ENCODE measurements at regions of chr18 and their contacts with region 1.

Region 1: GRCh38 chr18:31722369-31722957 is 38.1 kb upstream of the B4GALT6 start:
- DNase-seq: peak; percentile 60 to 95
- H3K4me3 ChIP-seq: no peak overlapping the region
- H3K27ac ChIP-seq: no peak overlapping the region
- H3K4me1 ChIP-seq: no peaks in the 10 kb centered on the region
- H3K27me3 ChIP-seq: no peaks in the 10 kb centered on the region
- CTCF ChIP-seq: peak; percentile 67 to 92 (median 84)
- EP300 ChIP-seq: no peak
- POLR2A ChIP-seq: no peak
- RAD21 ChIP-seq: peak; percentile 77 to 86

Region 2: GRCh38 chr18:31156821-31157777 is 565.4 kb before region 1 on chr18:
- CTCF ChIA-PET with region 1: no interaction called
- POLR2A ChIA-PET with region 1: no interaction called
- DNase-seq: no peak
- H3K4me3 ChIP-seq: no peak overlapping the region
- H3K27ac ChIP-seq: no peak overlapping the region
- H3K4me1 ChIP-seq: peaks cover 0 to 5% (median 0%) of the 10 kb centered on the region in 4 experiments; a peak in 1 of 7 replicates
- H3K27me3 ChIP-seq: no peaks in the 10 kb centered on the region
- CTCF ChIP-seq: no peak
- EP300 ChIP-seq: no peak
- POLR2A ChIP-seq: no peak
- RAD21 ChIP-seq: no peak

Region 3: DNA sequence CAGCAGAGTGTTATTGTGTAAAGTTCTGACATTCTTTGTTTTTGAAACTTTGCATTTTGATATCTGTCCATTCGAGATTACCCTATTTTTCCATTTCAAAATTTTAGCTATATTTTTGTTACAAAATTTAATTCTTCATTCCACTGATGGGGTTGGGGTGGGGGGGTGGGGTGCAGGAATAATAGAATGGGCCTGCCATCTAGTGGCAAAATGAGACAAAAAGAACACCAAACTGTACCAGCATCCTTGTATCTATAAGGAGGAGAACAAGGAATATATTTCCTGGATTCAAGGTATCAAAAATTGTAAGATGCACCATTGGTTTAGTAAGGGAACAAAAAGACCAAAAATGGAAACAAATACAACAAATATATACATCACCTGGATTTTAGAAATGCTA is 158.7 kb before region 1 on chr18:
- CTCF ChIA-PET with region 1: interaction called, 32 read pairs
- POLR2A ChIA-PET with region 1: no interaction called
- DNase-seq: no peak
- H3K4me3 ChIP-seq: no peak overlapping the region
- H3K27ac ChIP-seq: no peak overlapping the region
- H3K4me1 ChIP-seq: no peaks in the 10 kb centered on the region
- H3K27me3 ChIP-seq: no peaks in the 10 kb centered on the region
- CTCF ChIP-seq: no peak; a peak in 1 of 4 replicates
- EP300 ChIP-seq: no peak
- POLR2A ChIP-seq: no peak
- RAD21 ChIP-seq: no peak; a peak in 1 of 4 replicates

Region 4: GRCh38 chr18:31685097-31686082 is 37.1 kb before region 1 on chr18:
- CTCF ChIA-PET with region 1: interaction called, 22 read pairs
- POLR2A ChIA-PET with region 1: interaction called, 5 read pairs
- DNase-seq: peak; percentile 49 to 86
- H3K4me3 ChIP-seq: peak overlapping the region; percentile 73 to 82 (median 80)
- H3K27ac ChIP-seq: peak overlapping the region; percentile 79
- H3K4me1 ChIP-seq: peaks cover 11 to 14% (median 13%) of the 10 kb centered on the region in 4 experiments; a peak in 6 of 7 replicates
- H3K27me3 ChIP-seq: no peaks in the 10 kb centered on the region
- CTCF ChIP-seq: peak; percentile 4 to 50 (median 39)
- EP300 ChIP-seq: no peak; a peak in 1 of 3 replicates
- POLR2A ChIP-seq: peak; percentile 37 to 81
- RAD21 ChIP-seq: peak in 1 of 2 experiments; percentile 22; a peak in 1 of 4 replicates

Region 5: GRCh38 chr18:31710826-31711225 is 11.6 kb before region 1 on chr18:
- CTCF ChIA-PET with region 1: interaction called, 16 read pairs
- POLR2A ChIA-PET with region 1: no interaction called
- DNase-seq: no peak
- H3K4me3 ChIP-seq: no peak overlapping the region
- H3K27ac ChIP-seq: no peak overlapping the region
- H3K4me1 ChIP-seq: peaks cover 0 to 4% (median under 1%) of the 10 kb centered on the region in 4 experiments; a peak in 1 of 7 replicates
- H3K27me3 ChIP-seq: no peaks in the 10 kb centered on the region
- CTCF ChIP-seq: peak in 2 of 3 experiments; percentile 5 to 47; a peak in 1 of 4 replicates
- EP300 ChIP-seq: no peak
- POLR2A ChIP-seq: no peak
- RAD21 ChIP-seq: peak; percentile 29 to 36; a peak in 2 of 4 replicates

Region 6: GRCh38 chr18:31819106-31819924 is 96.9 kb after region 1 on chr18:
- CTCF ChIA-PET with region 1: interaction called, 11 read pairs
- POLR2A ChIA-PET with region 1: no interaction called
- DNase-seq: peak; percentile 15 to 55
- H3K4me3 ChIP-seq: peak overlapping the region in 1 of 4 experiments; percentile 22; a peak in 1 of 8 replicates
- H3K27ac ChIP-seq: no peak overlapping the region
- H3K4me1 ChIP-seq: peaks cover 0 to 15% (median 5%) of the 10 kb centered on the region in 4 experiments; a peak in 4 of 7 replicates
- H3K27me3 ChIP-seq: no peaks in the 10 kb centered on the region
- CTCF ChIP-seq: peak in 2 of 3 experiments; percentile 55 to 76; a peak in 2 of 4 replicates
- EP300 ChIP-seq: no peak
- POLR2A ChIP-seq: peak in 1 of 2 experiments; percentile 16; a peak in 1 of 3 replicates
- RAD21 ChIP-seq: peak; percentile 78 to 82

Measured in H1 (cell line).